ENCODE measurements at regions of chr21 and their contacts with region 1.

Region 1: GRCh38 chr21:36319765-36320420 is at the start of gene MORC3:
- DNase-seq: peak; percentile 99
- total RNA-seq, gene MORC3: 18.5 TPM

Region 2: DNA sequence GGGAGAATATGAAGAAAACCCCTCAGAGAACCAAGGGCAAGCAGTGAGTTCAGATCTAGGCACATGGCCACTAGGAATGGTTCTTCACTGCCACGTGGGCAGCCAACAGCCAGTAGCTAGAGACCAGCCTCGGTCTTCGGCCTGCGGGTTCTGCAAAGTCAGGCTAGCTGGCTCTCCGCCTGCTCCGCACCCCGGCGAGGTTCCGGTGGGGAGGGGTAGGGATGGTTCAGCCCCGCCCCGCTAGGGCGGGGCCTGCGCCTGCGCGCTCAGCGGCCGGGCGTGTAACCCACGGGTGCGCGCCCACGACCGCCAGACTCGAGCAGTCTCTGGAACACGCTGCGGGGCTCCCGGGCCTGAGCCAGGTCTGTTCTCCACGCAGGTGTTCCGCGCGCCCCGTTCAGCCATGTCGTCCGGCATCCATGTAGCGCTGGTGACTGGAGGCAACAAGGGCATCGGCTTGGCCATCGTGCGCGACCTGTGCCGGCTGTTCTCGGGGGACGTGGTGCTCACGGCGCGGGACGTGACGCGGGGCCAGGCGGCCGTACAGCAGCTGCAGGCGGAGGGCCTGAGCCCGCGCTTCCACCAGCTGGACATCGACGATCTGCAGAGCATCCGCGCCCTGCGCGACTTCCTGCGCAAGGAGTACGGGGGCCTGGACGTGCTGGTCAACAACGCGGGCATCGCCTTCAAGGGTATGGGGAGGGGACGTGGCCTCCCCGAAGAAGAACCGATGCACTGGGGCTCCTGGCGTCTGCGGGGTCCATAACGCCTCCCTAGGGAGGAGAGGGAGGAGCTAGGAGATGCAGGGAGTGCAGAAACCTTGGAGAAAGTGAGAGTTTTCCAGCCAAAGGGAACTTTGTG is 249.9 kb before region 1 on chr21 and contains the start of gene CBR1:
- intact Hi-C with region 1: loop called (anchors 5 kb)
- DNase-seq: peak; percentile 99
- total RNA-seq, gene CBR1: 24.1 TPM

Region 3: DNA sequence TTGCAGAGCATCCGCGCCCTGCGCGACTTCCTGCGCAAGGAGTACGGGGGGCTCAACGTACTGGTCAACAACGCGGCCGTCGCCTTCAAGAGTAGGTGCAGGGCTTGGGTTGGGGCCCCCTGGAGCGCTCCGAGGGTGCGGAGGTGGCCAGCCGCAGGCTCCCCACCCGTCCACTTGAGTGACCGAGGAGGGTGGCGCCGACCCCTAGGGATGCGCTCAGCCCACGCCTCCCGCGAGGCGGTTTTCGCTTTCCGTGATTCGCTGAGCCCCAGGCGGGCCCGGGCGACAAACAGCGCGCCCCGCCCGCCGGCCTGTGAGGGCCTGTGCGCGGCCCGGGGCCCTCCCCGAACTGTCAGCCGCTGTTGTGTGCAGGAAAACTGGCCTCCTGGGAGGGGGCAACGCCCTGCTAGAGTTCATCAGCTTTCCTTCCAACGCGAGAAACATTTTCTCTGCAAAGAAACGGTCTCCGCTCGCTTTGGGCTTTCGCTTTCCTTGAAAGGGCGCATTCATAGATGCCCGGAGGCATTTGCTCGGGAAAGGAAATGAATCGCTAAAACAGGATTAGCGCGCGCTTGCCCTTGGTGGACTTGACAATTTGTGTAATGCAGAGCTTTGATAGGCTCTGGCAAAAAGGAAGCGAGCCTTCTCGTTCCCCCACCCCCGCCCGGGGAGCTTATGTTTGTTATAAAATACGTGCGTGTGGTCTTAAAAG is 184.3 kb before region 1 on chr21:
- intact Hi-C with region 1: loop called (anchors 5 kb)
- DNase-seq: peak; percentile 79

Region 4: DNA sequence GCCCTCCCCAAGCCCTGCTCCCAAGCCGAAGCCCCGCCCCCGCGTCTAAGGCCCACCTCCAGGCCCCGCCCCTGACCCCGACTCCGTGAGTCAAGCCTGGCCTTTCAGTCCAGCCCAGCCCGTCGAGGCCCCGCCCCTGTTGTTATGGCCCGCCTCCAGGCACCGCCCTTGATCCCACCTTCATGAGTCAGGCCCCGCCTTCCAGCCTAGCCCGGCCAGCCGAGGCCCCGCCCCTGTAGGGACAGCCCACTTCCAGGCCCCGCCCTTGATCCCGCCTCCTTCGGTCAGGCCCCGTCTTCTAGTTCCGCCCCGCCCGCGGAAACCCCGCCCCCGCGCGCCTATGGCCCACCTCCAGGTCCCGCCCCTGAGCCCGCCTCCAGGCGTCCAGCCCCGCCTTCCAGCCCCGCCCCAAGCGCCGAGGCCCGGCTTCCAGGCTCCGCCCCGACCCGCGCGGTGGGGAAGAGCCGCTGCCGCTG is 163.5 kb before region 1 on chr21:
- intact Hi-C with region 1: loop called (anchors 5 kb)
- DNase-seq: peak; percentile 100

Region 5: GRCh38 chr21:36385233-36386030 is 65.5 kb after region 1 on chr21 and contains the start of gene CHAF1B:
- intact Hi-C with region 1: no loop called
- DNase-seq: peak; percentile 84
- total RNA-seq, gene CHAF1B: 0.62 TPM

Measured in cardiac septum (tissue), 1 donor.